ENCODE measurements at regions of chrX and their contacts with region 1.

Region 1: DNA sequence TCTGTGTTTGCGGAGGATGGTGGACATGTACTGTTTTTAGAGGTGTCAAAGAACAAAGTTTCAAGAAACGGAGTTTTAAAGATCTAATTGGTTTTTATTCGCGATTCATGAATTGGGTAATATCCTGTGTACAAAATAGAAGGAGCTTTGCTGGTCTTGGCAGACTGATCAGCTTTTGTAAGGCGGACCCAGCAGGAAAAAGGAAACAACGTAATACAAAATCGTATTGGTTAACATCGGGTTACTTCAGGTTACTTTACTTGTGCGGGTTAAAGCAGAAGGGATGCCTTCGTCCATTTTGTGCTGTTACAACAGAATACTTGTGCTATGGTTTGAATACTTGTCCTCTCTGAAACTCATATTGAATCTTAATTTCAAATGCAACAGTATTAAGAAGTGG is 11.4 kb upstream of the NYX start:
- DNase-seq: no peak
- H3K4me3 ChIP-seq: no peak overlapping the region
- H3K27ac ChIP-seq: no peak overlapping the region
- H3K4me1 ChIP-seq: no peaks in the 10 kb centered on the region
- H3K27me3 ChIP-seq: no peaks in the 10 kb centered on the region
- CTCF ChIP-seq: no peak

Region 2: GRCh38 chrX:41377624-41378023 is 58.1 kb before region 1 on chrX:
- CTCF ChIA-PET with region 1: no interaction called
- dilution Hi-C with region 1: loop called (anchors 5 kb)
- in situ Hi-C with region 1: no loop called
- intact Hi-C with region 1: no loop called
- DNase-seq: no peak
- H3K4me3 ChIP-seq: no peak overlapping the region
- H3K27ac ChIP-seq: no peak overlapping the region
- H3K4me1 ChIP-seq: peaks cover 3% of the 10 kb centered on the region
- H3K27me3 ChIP-seq: no peaks in the 10 kb centered on the region
- CTCF ChIP-seq: no peak

Measured in mammary epithelial cell (primary cell).